ENCODE measurements at regions of chr5 and their contacts with region 1.

Region 1: GRCh38 chr5:172697123-172698121 is 56.4 kb downstream of the NEURL1B start:
- DNase-seq: peak; percentile 87
- H3K4me3 ChIP-seq: peak overlapping the region; percentile 67
- H3K27ac ChIP-seq: no peak overlapping the region
- H3K4me1 ChIP-seq: peaks cover 7% of the 10 kb centered on the region
- CTCF ChIP-seq: peak; percentile 89

Region 2: DNA sequence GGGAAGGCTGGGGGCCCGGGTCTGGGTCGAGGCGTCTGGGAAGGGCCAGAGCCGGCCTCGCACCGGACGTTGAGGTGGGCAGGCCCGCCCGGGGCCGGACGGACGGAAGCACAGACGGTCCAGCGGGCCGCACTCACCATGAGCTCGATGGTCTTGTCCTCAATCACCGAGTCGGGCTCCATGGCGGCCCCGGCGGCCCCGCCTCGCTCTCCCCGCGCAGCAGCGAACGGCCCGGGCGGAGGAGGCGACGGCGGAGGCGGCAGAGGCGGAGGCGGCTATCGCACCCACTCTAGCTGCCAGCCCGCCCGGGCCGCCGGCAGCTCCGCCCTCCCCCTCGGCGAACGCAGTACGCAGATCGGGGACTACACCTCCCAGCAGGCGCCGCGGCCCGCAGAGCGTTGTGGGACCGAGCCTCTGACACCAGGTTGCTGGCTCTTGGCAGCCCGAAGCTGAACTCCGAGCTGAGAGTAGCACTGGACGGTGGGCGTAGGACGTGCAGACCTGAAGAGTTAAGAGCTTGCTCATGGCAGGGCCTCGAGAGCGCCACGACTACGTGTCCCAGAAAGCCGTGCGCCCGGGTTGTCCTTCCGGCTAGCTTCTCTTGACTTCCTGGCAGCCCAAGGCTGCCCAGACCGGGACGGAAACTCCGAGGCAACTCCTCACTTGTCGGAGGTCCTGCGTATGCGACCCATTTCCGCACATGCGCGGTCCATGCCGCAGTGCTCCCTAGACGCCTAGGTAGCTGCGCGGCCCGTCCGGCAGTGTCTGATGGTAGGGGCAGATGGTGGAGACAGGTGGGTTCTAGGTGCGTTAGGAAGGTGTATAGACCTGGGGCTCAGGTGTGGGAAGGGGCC is 690.9 kb before region 1 on chr5 and contains the start of gene FBXW11:
- CTCF ChIA-PET with region 1: no interaction called
- POLR2A ChIA-PET with region 1: no interaction called
- intact Hi-C with region 1: no loop called
- DNase-seq: peak; percentile 98
- H3K4me3 ChIP-seq: peak within 1 kb of the TSS; percentile 95
- H3K27ac ChIP-seq: peak within 1 kb of the TSS; percentile 69
- H3K4me1 ChIP-seq: peaks cover 35% of the 10 kb centered on the region
- CTCF ChIP-seq: no peak
- total RNA-seq, gene FBXW11: 33.0 and 40.9 TPM in 2 replicates

Region 3: GRCh38 chr5:172458976-172459782 is 238.2 kb before region 1 on chr5:
- CTCF ChIA-PET with region 1: interaction called, 3 read pairs
- POLR2A ChIA-PET with region 1: no interaction called
- intact Hi-C with region 1: loop called (anchors 1 kb)
- DNase-seq: no peak
- H3K4me3 ChIP-seq: no peak overlapping the region
- H3K27ac ChIP-seq: no peak overlapping the region
- H3K4me1 ChIP-seq: no peaks in the 10 kb centered on the region
- CTCF ChIP-seq: no peak